SK-N-SH (cell line): ENCODE measurements at regions of chr1 and their contacts with region 1.

Region 1: DNA sequence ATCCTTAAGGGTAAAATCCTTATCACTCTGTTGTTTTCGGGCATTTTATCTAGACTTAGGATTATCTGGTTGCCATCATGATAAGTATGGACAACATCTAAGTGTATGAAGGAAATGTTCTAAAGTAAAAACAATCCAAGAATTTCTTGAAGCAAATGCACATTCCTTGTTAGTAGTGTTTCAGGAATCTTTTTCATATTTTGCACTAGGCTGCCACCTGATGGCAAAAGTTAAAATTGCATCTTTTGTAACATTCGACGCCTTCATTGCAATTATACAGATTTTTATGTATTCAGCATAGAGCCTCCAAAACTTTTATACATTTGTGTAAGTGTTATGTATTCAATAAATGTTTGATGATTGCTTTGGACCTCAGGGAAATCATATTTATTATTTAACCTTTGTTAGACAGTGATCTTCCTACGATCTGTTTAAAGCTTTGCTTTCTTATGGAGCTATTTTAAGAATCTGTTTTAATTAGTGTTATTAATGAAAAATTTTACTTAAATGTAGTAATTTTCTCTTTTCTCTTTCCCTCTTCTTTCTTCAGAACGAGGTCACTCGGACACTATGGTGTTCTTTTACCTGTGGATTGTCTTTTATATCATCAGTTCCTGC is 49.4 kb upstream of the KIAA1614 start:
- DNase-seq: peak; percentile 34
- H3K4me3 ChIP-seq: no peak overlapping the region; a peak in 1 of 4 replicates
- H3K27ac ChIP-seq: peak overlapping the region; percentile 23 to 43; a peak in 1 of 4 replicates
- H3K4me1 ChIP-seq: peaks cover 0 to 4% of the 10 kb centered on the region in 2 experiments; a peak in 1 of 4 replicates
- H3K27me3 ChIP-seq: no peaks in the 10 kb centered on the region
- CTCF ChIP-seq: peak; percentile 80
- EP300 ChIP-seq: no peak
- RAD21 ChIP-seq: peak; percentile 92

Region 2: DNA sequence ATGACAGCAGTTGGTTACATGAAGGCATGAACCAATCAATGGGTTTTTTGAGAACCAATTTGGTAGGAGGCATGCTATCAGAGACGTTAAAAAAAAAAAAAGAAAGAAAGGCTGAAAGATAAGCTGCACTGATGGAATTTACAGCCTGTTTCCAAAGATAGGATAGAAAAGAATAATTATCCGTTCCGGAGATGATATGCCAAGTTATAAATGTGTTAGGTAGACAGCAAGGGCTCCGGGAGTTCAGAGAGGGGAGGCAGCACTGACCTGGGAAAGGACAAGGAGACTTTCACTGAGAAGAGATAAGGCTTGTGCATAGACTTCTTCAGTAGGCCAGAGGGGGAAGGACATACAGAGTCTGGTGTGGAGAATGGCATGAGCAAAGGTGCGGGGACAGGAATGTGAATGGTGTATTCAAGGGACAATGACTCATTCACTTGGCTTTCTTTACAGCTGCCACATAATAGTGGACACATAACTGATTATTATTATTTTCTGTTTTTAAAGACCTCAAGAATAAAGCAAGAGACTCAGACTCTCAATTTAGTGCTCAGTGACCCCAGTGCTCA is 336.1 kb before region 1 on chr1:
- CTCF ChIA-PET with region 1: interaction called, 213 read pairs
- POLR2A ChIA-PET with region 1: no interaction called
- DNase-seq: no peak
- H3K4me3 ChIP-seq: no peak overlapping the region
- H3K27ac ChIP-seq: no peak overlapping the region
- H3K4me1 ChIP-seq: peaks cover 0 to 18% of the 10 kb centered on the region in 2 experiments; a peak in 2 of 4 replicates
- H3K27me3 ChIP-seq: no peaks in the 10 kb centered on the region
- CTCF ChIP-seq: no peak
- EP300 ChIP-seq: no peak
- RAD21 ChIP-seq: no peak

Region 3: DNA sequence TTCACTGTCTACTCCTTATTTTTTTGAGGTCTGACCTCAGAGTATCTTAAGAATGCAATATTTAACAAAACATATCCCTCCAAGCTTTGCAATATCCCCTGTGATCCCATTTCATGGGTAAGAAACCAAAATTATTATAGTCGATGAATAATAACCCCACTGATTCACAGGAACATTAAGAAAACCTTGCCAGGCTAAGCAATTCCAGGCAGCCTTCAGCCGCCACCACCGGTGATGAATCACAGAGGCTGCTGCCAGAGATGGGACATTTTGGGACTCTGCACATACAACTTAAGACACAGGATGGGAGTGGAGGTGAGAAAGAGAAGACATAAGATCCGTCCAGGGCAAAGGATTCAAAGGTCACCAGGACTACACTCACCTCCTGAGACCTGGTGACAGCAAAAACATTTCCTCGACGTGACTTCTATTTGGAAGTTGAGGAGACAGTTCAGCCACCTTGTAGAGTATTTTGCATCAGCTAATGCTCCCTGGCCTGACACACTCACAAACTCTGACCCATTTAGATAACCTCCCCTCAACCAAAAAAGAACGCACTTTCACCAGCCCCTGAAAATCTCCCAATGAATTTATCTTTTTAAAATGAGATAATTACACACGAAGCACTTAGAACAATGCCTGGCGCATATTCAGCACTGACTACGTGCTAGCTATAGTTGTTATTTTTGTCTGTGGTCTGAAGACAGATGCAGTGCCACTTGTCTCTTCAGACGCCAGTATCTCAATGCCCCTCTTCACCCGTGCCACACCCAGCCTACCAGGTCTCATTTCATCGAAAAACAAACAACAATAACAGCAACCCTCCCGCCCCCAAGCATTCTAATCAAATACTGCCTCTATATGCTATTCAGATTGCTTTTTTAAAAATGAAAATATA is 322.3 kb before region 1 on chr1:
- CTCF ChIA-PET with region 1: interaction called, 213 read pairs
- POLR2A ChIA-PET with region 1: no interaction called
- DNase-seq: no peak
- H3K4me3 ChIP-seq: no peak overlapping the region
- H3K27ac ChIP-seq: peak overlapping the region in 1 of 2 experiments; percentile 49; a peak in 2 of 4 replicates
- H3K4me1 ChIP-seq: peaks cover 0 to 3% of the 10 kb centered on the region in 2 experiments; a peak in 1 of 4 replicates
- H3K27me3 ChIP-seq: no peaks in the 10 kb centered on the region
- CTCF ChIP-seq: no peak
- EP300 ChIP-seq: no peak
- RAD21 ChIP-seq: no peak

Region 4: DNA sequence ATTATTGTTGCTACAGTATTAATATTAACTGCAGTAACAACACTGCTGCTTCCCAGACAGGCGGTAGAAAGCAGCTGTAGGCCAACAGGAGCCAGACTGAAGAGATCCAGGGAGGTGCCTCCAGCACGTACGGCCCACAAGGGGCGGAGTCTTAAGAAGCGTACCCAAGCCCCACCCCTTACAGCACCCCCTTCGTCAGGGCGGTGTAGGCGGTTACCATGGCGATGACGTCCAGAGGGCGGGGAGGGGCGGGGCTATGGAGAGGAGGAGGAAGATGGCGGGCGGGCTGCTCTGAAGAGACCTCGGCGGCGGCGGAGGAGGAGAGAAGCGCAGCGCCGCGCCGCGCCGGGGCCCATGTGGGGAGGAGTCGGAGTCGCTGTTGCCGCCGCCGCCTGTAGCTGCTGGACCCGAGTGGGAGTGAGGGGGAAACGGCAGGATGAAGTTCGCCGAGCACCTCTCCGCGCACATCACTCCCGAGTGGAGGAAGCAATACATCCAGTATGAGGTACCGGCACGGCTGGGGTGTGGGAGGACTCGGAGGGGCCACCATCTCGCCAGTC is 231.4 kb before region 1 on chr1 and contains the start of gene XPR1:
- CTCF ChIA-PET with region 1: interaction called, 50 read pairs
- POLR2A ChIA-PET with region 1: no interaction called
- DNase-seq: peak; percentile 95
- H3K4me3 ChIP-seq: peak within 1 kb of the TSS; percentile 72 to 99
- H3K27ac ChIP-seq: peak within 1 kb of the TSS; percentile 85 to 95
- H3K4me1 ChIP-seq: peaks cover 20 to 22% of the 10 kb centered on the region in 2 experiments; a peak in 3 of 4 replicates
- H3K27me3 ChIP-seq: no peaks in the 10 kb centered on the region
- CTCF ChIP-seq: no peak
- EP300 ChIP-seq: no peak
- RAD21 ChIP-seq: peak; percentile 44; the same call in 1 of the 2 replicates
- polyA plus RNA-seq, gene XPR1: 7.9 and 11.5 TPM in 2 replicates

Region 5: GRCh38 chr1:180762796-180763195 is 100.5 kb before region 1 on chr1:
- CTCF ChIA-PET with region 1: no interaction called
- POLR2A ChIA-PET with region 1: no interaction called
- DNase-seq: no peak
- H3K4me3 ChIP-seq: no peak overlapping the region
- H3K27ac ChIP-seq: no peak overlapping the region
- H3K4me1 ChIP-seq: no peaks in the 10 kb centered on the region
- H3K27me3 ChIP-seq: no peaks in the 10 kb centered on the region
- CTCF ChIP-seq: no peak
- EP300 ChIP-seq: no peak
- RAD21 ChIP-seq: no peak

Region 6: DNA sequence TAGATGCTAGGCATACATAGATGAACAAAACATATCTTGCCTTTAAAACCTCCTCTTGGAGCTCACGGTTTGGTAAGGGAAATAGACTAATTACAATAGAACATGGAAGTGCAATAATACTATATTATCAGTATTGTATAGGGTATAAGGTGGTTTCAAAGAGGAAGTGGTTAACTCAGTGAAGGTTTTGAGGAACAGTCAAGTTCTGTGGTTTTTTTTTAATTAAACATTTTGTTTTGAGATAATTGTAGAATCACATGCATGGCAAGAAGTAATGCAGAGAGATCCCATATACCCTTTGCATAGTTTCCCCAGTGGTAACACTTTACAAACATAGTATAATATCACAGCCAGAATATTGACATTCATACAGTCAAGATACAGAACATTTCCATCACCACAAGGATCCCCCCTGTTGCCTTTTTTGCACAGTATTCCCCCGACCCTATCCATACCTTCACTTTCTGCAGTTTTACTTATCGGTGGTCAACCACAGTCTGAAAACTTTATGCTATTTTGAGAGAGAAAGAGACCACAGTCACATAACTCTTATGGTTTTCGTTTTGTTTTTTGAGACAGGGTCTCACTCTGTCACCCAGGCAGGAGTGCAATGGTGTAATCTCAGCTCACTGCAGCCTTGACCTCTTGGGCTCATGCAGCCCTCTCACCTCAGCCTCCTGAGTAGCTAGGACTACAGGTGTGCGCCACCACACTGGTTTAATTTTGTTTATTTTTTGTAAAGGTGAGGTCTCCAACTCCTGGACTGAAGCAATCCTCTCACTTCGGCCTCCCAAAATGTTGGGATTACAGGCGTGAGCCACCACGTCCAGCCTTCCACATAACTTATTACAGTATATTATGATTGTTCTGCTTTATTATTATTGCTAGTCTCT is 11.0 kb before region 1 on chr1:
- CTCF ChIA-PET with region 1: interaction called, 15 read pairs
- POLR2A ChIA-PET with region 1: no interaction called
- DNase-seq: no peak
- H3K4me3 ChIP-seq: no peak overlapping the region
- H3K27ac ChIP-seq: no peak overlapping the region
- H3K4me1 ChIP-seq: peaks cover 6 to 13% of the 10 kb centered on the region in 2 experiments; a peak in 3 of 4 replicates
- H3K27me3 ChIP-seq: no peaks in the 10 kb centered on the region
- CTCF ChIP-seq: no peak
- EP300 ChIP-seq: no peak
- RAD21 ChIP-seq: no peak

Region 7: GRCh38 chr1:181038399-181038873 is 175.2 kb after region 1 on chr1:
- CTCF ChIA-PET with region 1: no interaction called
- POLR2A ChIA-PET with region 1: no interaction called
- DNase-seq: peak; percentile 75
- H3K4me3 ChIP-seq: no peak overlapping the region
- H3K27ac ChIP-seq: no peak overlapping the region
- H3K4me1 ChIP-seq: peaks cover 0 to 6% of the 10 kb centered on the region in 2 experiments; a peak in 2 of 4 replicates
- H3K27me3 ChIP-seq: no peaks in the 10 kb centered on the region
- CTCF ChIP-seq: peak; percentile 76
- EP300 ChIP-seq: no peak
- RAD21 ChIP-seq: peak; percentile 77